RWPE1 (cell line): ENCODE measurements at regions of chr12 and their contacts with region 1.

Region 1: DNA sequence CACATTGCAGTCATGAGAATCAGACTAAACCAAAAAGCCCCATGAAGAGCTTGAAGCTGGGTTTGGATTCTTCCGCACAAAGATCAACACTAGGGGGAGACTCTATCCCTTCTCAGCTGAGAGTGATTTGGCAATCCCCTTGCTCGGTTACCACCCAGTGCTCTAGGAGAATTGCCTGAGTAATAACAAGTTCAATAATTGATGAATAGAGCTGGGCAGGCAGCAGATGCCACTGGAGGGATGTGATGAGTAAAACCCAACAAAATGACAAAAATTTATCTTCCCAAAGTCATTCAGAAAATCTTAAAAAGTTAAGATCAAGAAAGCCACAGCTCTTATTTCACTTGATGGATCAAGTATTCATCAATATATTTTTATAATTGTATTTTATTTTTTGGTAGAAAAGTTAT is 185.6 kb upstream of the ARID2 start:
- DNase-seq: peak; percentile 81
- H3K27ac ChIP-seq: no peak overlapping the region
- CTCF ChIP-seq: peak; percentile 68

Region 2: GRCh38 chr12:45622210-45622937 is 78.5 kb after region 1 on chr12:
- CTCF ChIA-PET with region 1: no interaction called
- POLR2A ChIA-PET with region 1: no interaction called
- DNase-seq: no peak
- H3K27ac ChIP-seq: no peak overlapping the region
- CTCF ChIP-seq: no peak

Region 3: DNA sequence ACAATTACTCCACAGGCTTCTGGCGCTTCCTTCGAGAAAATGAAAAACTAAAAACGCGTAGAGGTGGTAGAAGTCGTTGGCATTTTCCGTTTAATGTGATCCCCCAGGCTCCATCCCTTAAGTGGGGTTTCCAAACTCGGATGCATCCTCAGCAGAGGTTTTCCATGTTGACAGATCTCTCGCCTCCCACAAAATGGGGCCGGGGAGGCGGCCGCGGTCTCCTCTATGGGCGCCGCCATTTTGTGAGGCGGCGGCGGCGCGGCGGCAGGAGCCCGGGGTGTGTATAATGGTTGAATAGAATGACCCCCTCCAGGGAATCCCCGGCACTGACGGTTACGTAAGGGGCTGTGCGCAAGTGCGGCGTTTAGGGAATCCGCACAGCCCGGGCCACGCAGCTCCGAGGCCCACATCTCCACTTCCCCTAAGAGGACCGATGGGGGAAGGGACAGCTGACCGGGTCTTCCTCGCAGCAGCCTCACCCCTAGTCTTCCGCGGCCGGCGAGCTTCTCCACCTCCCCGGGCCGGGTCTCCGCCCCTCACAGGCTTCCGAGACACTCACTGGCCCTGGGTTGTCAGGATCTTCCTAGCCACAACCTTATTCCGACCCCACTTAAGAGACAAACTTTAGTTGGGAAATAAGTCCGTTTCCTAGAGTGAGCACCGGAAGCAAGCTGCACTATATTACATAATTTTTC is 183.5 kb after region 1 on chr12:
- CTCF ChIA-PET with region 1: interaction called, 22 read pairs
- POLR2A ChIA-PET with region 1: interaction called, 3 read pairs
- DNase-seq: peak; percentile 95
- H3K27ac ChIP-seq: peak overlapping the region; percentile 99
- CTCF ChIP-seq: no peak